ENCODE measurements at regions of chr3 and their contacts with region 1.

Region 1: DNA sequence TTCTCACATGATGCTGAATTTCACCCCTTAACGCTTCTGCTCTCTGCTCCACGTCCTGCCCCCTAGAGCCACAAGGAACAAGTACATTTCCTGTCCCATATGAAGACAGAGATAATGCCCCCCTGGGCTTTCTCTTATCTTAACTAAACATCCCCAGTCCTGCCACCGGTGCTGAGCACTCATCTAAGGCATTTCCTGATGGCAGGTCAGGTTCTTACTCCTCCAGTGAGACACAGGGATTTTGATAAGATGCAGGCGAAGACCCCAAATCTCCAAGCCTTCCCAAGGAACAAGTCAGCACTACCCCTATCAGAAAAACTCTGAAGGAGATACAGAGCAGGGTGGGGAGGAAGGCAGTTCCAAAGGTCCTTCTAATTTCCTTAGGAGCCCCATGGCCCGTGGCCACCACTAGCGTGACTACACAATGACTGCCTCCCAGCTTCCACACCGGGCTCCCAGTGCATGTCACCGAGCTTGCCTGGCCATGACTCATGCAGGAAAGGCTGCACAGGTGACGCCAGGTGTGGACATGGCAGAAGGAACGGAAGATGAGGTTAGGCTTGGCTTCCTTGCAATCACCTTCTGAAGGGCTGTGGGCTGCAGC is 152.9 kb downstream of the XXYLT1 start:
- DNase-seq: peak; percentile 80
- H3K4me3 ChIP-seq: no peak overlapping the region
- H3K27ac ChIP-seq: peak overlapping the region; percentile 87
- H3K4me1 ChIP-seq: peaks cover 49% of the 10 kb centered on the region
- H3K27me3 ChIP-seq: no peaks in the 10 kb centered on the region
- CTCF ChIP-seq: peak; percentile 51 to 58
- POLR2A ChIP-seq: peak; percentile 65

Region 2: GRCh38 chr3:194671900-194672808 is 445.9 kb before region 1 on chr3 and contains the start of gene LSG1:
- CTCF ChIA-PET with region 1: interaction called, 10 read pairs
- POLR2A ChIA-PET with region 1: no interaction called
- dilution Hi-C with region 1: loop called (anchors 25 kb)
- intact Hi-C with region 1: loop called (anchors 1 kb)
- DNase-seq: peak; percentile 96
- H3K4me3 ChIP-seq: peak within 1 kb of the TSS; percentile 61 to 97 (median 64)
- H3K27ac ChIP-seq: peak within 1 kb of the TSS; percentile 93
- H3K4me1 ChIP-seq: peaks cover 15% of the 10 kb centered on the region
- H3K27me3 ChIP-seq: peaks cover 0 to 2% of the 10 kb centered on the region in 2 experiments
- CTCF ChIP-seq: no peak
- POLR2A ChIP-seq: peak; percentile 80
- total RNA-seq, gene LSG1: 48.3 and 52.7 TPM in 2 replicates

Region 3: DNA sequence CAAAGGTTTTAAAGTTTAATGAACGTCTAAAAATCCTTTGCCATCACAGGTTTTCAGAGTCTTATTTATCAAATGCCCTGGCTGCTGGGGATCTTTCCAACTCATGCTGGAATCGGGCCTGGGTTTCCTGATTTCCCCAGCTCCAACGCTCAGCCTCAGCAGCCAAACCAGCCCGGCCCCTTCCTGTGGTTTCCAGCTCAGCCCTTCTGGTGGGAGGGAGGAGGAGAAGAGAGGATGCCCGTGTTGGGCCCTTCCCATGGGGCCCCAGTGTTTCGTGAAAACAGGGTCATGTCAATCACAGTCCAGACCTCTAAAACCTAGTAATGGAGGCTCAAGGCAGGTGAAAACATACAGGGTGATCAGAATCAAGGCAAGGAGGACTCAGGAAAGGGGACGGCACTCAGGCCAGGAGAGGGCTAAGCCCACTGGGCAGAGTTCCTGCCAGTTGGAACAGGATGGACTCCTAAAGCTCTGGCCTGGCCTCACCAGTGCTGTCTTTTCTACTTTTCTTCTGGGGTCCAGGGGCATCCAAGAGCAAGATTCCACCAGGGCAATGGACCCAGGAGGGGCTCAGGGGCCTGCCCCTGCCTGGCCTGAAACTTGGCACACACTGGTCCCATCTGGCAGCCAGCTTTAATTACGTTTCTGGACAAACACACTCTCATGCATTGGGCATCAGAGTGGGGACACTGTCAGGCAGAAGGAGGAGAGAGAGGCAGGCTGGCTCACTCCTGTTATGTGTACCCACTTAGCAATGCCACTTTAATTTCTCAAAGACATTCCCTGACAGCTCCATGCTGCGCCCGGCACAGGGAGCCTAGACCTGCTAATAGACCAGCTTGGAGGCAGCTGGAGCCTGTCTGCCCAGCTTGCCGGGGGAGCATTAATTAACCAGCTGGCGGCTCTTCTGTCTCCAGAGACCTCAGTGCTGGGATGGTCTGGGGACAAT is 237.8 kb before region 1 on chr3:
- CTCF ChIA-PET with region 1: no interaction called
- POLR2A ChIA-PET with region 1: no interaction called
- dilution Hi-C with region 1: no loop called
- intact Hi-C with region 1: loop called (anchors 5 kb)
- DNase-seq: peak; percentile 80
- H3K4me3 ChIP-seq: no peak overlapping the region
- H3K27ac ChIP-seq: peak overlapping the region; percentile 54
- H3K4me1 ChIP-seq: peaks cover 28% of the 10 kb centered on the region
- H3K27me3 ChIP-seq: no peaks in the 10 kb centered on the region
- CTCF ChIP-seq: no peak
- POLR2A ChIP-seq: no peak

Region 4: DNA sequence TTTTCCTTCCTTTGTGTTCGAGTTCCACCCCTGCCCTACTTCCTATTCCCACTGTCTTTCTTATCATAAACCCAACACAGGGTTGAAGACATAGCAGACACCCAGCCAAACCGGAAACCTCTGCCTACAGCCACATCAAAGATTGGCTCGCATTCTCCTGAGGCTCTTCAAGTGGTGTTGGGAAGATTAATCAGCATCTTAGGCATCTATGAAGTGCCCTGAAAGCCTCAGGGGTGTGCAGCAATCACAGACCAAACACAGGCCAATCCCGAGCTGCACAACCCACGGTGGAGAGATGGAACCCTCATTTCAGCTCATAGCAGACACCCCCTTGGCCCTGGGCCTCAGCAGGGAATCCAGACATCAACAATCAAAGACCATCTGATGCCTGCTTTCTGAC is 103.1 kb before region 1 on chr3:
- CTCF ChIA-PET with region 1: no interaction called
- POLR2A ChIA-PET with region 1: no interaction called
- dilution Hi-C with region 1: no loop called
- intact Hi-C with region 1: no loop called
- DNase-seq: peak; percentile 57
- H3K4me3 ChIP-seq: no peak overlapping the region
- H3K27ac ChIP-seq: peak overlapping the region; percentile 29
- H3K4me1 ChIP-seq: peaks cover 22% of the 10 kb centered on the region
- H3K27me3 ChIP-seq: no peaks in the 10 kb centered on the region
- CTCF ChIP-seq: no peak
- POLR2A ChIP-seq: no peak

Region 5: GRCh38 chr3:195106418-195106906 is 11.6 kb before region 1 on chr3:
- CTCF ChIA-PET with region 1: interaction called, 23 read pairs
- POLR2A ChIA-PET with region 1: no interaction called
- dilution Hi-C with region 1: no loop called
- intact Hi-C with region 1: loop called (anchors 1 kb)
- DNase-seq: peak; percentile 76
- H3K4me3 ChIP-seq: no peak overlapping the region
- H3K27ac ChIP-seq: peak overlapping the region; percentile 96
- H3K4me1 ChIP-seq: peaks cover 44% of the 10 kb centered on the region
- H3K27me3 ChIP-seq: no peaks in the 10 kb centered on the region
- CTCF ChIP-seq: peak; percentile 97 to 98
- POLR2A ChIP-seq: no peak

Region 6: DNA sequence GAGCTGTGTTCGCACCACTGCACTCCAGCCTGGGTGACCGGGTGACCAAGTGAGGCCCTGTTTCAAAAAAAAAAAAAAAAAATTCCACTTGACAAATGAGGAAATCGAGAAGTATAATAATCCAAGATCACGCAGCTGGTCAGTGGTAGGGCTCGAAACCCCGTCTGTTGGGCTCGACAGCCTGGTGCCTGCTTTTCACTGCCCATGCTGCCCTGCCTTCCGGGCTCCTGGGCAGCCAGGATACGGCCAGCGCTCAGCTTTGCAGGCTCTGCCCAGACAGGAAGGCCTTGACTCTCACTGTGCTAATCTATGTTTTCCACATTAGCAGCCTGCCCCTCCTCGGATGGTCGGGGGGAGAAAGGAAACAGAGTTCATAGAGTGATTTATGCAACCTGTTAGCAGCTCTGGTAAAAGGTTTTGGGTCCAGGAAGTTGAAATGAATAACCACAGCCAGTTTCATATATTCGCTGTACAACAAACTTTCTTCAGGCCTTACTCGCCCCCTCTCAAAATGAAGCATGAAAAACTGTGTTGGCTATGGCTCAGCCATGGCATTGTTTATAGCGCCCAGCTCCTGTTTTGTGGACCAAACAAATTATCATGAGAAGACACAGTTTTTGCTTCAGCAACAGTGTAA is 44.1 kb after region 1 on chr3:
- CTCF ChIA-PET with region 1: interaction called, 7 read pairs
- POLR2A ChIA-PET with region 1: no interaction called
- dilution Hi-C with region 1: no loop called
- intact Hi-C with region 1: loop called (anchors 1 kb)
- DNase-seq: peak; percentile 99
- H3K4me3 ChIP-seq: no peak overlapping the region
- H3K27ac ChIP-seq: peak overlapping the region; percentile 95
- H3K4me1 ChIP-seq: peaks cover 85% of the 10 kb centered on the region
- H3K27me3 ChIP-seq: no peaks in the 10 kb centered on the region
- CTCF ChIP-seq: no peak
- POLR2A ChIP-seq: peak; percentile 89

Region 7: GRCh38 chr3:195226900-195227447 is 108.9 kb after region 1 on chr3:
- CTCF ChIA-PET with region 1: no interaction called
- POLR2A ChIA-PET with region 1: no interaction called
- dilution Hi-C with region 1: no loop called
- intact Hi-C with region 1: loop called (anchors 1 kb)
- DNase-seq: peak; percentile 46
- H3K4me3 ChIP-seq: no peak overlapping the region
- H3K27ac ChIP-seq: no peak overlapping the region
- H3K4me1 ChIP-seq: peaks cover 28% of the 10 kb centered on the region
- H3K27me3 ChIP-seq: no peaks in the 10 kb centered on the region
- CTCF ChIP-seq: peak; percentile 44 to 63
- POLR2A ChIP-seq: no peak